ENCODE measurements at regions of chr6 and their contacts with region 1.

Region 1: DNA sequence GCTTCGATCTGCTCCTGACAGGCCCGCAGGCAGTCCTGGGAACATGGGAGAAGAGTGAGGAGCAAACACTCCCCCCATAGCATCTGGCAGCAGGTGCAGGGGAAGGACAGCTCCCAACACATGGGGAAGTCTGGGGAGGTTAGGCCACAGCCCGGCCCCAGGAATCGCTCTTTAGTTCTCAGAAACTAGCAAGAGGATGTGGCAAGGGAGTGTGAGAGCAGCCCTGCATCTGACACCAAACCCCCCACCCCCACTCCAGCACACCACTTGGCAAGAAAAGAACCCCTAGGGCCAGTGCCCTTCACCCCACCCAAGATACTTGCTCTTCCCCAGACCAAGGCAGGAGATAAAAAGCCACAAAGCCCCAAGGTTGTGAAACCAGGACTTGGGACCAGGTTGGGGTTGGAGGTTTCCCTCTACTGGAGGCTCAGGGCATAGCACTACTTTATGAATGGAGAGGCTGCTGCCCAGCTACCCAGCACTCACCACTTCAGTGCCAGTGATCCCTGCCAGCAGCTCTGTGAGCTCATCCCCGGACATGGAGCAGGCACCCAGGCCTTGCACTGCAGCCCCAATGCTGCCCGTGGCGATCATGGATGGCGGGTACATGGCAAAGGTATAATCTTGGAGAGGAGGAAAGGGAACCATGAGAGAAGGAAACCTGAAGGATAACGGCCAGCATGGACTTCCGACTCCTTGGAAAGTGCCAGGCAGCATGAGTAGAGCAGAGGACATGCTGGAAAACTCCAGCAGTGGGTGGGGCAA is 5.4 kb downstream of the CCND3 start:
- DNase-seq: peak; percentile 68 to 80
- H3K4me3 ChIP-seq: no peak overlapping the region
- H3K4me3 Mint-ChIP-seq: no peak overlapping the region
- H3K27ac Mint-ChIP-seq: peak overlapping the region; percentile 20
- H3K4me1 ChIP-seq: peaks cover 33% of the 10 kb centered on the region
- H3K4me1 Mint-ChIP-seq: peaks cover 17% of the 10 kb centered on the region
- H3K27me3 ChIP-seq: no peaks in the 10 kb centered on the region
- H3K27me3 Mint-ChIP-seq: no peaks in the 10 kb centered on the region
- CTCF ChIP-seq: peak; percentile 83 to 91

Region 2: DNA sequence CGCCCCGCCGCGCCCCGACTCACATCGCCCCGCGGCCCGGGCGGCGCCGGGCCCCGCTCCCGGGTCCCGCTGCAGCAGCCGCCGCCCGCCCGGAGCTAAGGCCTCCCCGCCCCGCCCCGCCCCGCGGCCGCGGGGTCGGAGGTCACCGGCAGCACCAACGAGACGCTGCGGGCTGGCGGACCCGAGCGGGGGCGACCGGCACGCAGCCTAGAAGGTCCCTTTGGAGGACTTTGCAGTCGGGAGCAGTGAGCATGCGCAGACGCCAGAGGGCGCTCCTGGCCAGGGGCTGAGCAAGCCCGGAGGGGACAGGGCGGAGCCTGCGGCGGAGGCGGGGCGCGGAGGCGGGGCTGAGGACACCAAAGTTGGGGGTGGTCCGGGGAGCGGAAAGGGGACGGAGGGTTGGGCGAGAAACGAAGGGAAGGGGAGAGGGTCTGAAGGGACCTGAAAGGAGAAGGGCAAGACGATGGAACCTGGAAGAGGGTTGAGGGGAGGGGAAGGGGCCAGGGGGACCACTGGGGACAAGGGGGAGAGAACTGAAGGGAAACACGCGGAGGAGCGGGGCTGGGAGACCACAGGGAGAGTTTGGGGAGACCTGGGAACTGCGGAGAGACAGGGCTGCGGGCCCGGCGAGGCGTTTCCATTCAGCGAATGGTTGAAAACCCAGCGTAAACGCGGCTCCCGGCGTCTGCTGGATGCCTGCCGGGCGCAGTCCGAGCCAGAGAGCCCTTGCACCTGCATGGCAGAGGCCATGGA is 156.3 kb before region 1 on chr6 and contains the start of gene FRS3:
- CTCF ChIA-PET with region 1: no interaction called
- POLR2A ChIA-PET with region 1: no interaction called
- intact Hi-C with region 1: loop called (anchors 1 kb)
- DNase-seq: peak; percentile 96 to 99
- H3K4me3 ChIP-seq: peak within 1 kb of the TSS; percentile 82
- H3K4me3 Mint-ChIP-seq: peak within 1 kb of the TSS; percentile 88
- H3K27ac Mint-ChIP-seq: peak within 1 kb of the TSS; percentile 74
- H3K4me1 ChIP-seq: 0 out of 2 replicates have a peak, but pooled peaks cover 3% of the 10 kb centered on the region
- H3K4me1 Mint-ChIP-seq: peaks cover 18% of the 10 kb centered on the region
- H3K27me3 ChIP-seq: no peaks in the 10 kb centered on the region
- H3K27me3 Mint-ChIP-seq: no peaks in the 10 kb centered on the region
- CTCF ChIP-seq: peak; percentile 85 to 96
- total RNA-seq, gene FRS3: 4.1 and 4.3 TPM in 2 replicates

Region 3: GRCh38 chr6:41801380-41801779 is 134.9 kb before region 1 on chr6:
- CTCF ChIA-PET with region 1: no interaction called
- POLR2A ChIA-PET with region 1: interaction called, 5 read pairs
- intact Hi-C with region 1: loop called (anchors 5 kb)
- DNase-seq: peak in 1 of 2 experiments; percentile 31
- H3K4me3 ChIP-seq: no peak overlapping the region
- H3K4me3 Mint-ChIP-seq: no peak overlapping the region
- H3K27ac Mint-ChIP-seq: no peak overlapping the region
- H3K4me1 ChIP-seq: no peaks in the 10 kb centered on the region
- H3K4me1 Mint-ChIP-seq: no peaks in the 10 kb centered on the region
- H3K27me3 ChIP-seq: no peaks in the 10 kb centered on the region
- H3K27me3 Mint-ChIP-seq: no peaks in the 10 kb centered on the region
- CTCF ChIP-seq: peak; percentile 37 to 52

Region 4: DNA sequence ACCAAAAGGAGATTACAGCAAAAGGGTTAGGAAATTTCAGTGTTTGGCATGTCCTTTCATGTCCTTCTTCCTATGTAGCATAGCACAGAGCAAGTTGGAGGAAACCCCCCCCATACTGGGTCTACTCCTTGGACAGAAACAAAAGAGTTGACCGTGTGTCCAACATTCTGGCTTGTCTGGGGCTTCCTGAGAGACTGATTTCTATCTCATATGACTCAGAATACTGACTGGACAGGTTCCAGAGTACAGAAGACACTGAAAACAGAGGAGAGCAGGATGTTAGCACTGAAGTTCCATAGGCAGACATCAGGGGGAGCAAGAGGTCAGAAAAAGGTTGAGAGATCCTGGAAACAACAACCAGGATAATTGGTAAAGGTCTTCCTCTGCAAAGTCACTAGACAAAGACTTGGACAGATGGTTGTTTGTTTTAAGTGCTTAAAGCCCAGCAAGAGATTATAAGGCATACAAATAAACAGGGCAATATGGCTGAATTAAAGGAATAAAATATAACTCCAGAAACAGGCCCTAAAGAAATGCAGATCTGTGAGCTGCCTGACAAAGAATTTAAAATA is 89.5 kb before region 1 on chr6:
- CTCF ChIA-PET with region 1: interaction called, 3 read pairs
- POLR2A ChIA-PET with region 1: interaction called, 3 read pairs
- intact Hi-C with region 1: loop called (anchors 1 kb)
- DNase-seq: peak; percentile 65 to 83
- H3K4me3 ChIP-seq: no peak overlapping the region
- H3K4me3 Mint-ChIP-seq: no peak overlapping the region
- H3K27ac Mint-ChIP-seq: no peak overlapping the region
- H3K4me1 ChIP-seq: peaks cover 5% of the 10 kb centered on the region; the same call in 1 of the 2 replicates
- H3K4me1 Mint-ChIP-seq: peaks cover 12% of the 10 kb centered on the region
- H3K27me3 ChIP-seq: no peaks in the 10 kb centered on the region
- H3K27me3 Mint-ChIP-seq: no peaks in the 10 kb centered on the region
- CTCF ChIP-seq: peak; percentile 81 to 86

Region 5: DNA sequence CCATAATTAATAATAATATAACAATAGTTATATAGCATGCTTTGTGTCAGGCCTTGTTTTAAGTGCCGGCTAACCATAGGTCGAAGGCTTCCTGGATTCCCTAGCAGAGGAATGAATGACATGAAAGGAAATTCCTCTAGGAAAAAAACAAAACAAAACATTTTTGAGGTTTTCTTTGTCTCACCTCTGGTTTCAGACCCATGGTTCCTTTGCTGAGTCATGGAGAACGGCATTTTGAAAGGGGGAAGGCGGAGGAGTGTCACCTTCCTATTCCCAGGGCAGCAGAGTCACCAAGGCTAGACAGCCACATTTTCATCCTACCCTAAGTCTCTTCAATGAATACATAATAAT is 30.7 kb after region 1 on chr6:
- CTCF ChIA-PET with region 1: no interaction called
- POLR2A ChIA-PET with region 1: no interaction called
- intact Hi-C with region 1: loop called (anchors 1 kb)
- DNase-seq: no peak
- H3K4me3 ChIP-seq: no peak overlapping the region
- H3K4me3 Mint-ChIP-seq: no peak overlapping the region
- H3K27ac Mint-ChIP-seq: no peak overlapping the region
- H3K4me1 ChIP-seq: peaks cover 16% of the 10 kb centered on the region
- H3K4me1 Mint-ChIP-seq: peaks cover under 1% of the 10 kb centered on the region
- H3K27me3 ChIP-seq: no peaks in the 10 kb centered on the region
- H3K27me3 Mint-ChIP-seq: no peaks in the 10 kb centered on the region
- CTCF ChIP-seq: no peak

Region 6: DNA sequence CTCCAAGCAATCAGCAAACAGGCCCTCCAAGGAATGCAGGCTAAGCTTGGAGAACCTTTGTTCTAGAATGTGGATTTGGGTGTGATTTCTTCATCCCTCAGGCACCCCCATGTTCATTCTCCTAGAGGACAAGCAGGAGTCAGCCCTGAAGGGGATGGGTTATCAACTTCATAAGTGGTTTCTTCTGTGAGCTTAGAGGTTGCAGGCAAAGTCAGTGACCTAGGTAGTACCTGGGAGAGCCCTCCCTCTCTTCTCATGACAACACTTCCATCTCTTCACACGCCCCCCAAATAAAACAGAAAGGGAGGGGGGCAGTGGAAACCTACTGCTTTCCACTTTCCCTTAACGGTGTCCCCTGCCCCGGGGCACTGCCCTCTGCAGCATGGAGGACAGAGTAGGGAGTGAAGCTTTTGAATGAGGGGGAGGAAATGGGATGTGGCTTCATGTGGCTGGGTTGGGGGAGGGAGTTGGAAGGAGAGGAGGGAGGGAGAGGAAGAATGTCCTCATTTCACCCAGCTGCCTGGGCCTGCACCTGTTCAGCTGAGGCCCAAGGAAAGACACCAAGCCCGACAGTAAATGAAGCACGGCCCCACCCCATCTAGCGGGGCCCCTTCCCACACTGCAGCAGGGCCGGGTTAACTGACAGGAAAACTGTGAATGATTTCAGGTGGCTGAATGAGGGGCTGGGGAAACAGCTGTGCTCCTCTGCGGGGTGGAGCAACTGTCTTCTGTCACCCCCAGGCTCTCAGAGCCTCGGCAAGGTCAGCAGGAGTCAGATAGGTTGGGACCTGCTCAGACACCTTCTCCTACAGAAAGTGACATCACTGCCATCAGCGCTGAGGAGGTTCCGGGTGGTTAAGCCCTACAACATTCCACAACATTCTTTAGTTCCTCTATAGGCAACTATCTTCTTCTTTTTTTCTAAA is 74.0 kb after region 1 on chr6:
- CTCF ChIA-PET with region 1: no interaction called
- POLR2A ChIA-PET with region 1: no interaction called
- intact Hi-C with region 1: loop called (anchors 1 kb)
- DNase-seq: peak; percentile 49 to 62
- H3K4me3 ChIP-seq: no peak overlapping the region
- H3K4me3 Mint-ChIP-seq: no peak overlapping the region
- H3K27ac Mint-ChIP-seq: peak overlapping the region; percentile 64
- H3K4me1 ChIP-seq: peaks cover 10% of the 10 kb centered on the region
- H3K4me1 Mint-ChIP-seq: peaks cover 13% of the 10 kb centered on the region
- H3K27me3 ChIP-seq: no peaks in the 10 kb centered on the region
- H3K27me3 Mint-ChIP-seq: no peaks in the 10 kb centered on the region
- CTCF ChIP-seq: no peak

Region 7: DNA sequence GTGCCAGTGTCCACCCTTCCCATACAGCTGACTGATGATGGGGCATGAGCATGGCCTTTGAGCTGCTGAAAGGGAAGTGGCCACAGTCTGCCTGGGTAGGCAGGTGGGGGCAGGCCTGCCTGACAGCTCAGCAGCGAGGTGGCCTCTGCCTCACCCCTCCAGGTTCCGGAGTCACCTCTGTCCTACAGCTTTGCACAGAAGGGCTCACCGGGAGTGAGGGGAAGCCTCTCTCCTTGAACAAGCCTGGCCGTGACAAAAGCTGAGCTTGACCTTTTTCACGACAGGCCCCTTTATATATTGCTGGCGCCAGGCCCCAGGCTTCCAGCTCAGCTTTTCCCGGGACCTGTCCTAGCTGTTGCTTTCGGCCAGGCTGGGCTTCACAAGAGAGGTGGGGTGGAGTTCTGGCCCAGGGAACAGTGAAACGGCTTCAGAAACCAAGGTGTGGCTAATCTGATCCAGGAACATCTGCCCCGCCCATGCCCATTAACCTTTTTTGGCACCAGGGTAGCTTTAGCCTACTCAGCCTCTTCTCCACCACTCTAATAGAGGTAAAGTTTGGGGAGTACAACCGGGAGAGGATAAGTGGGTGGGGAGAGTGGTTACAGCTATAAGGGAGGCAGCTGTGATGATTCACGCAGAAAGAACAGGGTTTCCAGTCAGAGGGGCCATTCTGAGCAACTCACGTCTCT is 163.2 kb after region 1 on chr6:
- CTCF ChIA-PET with region 1: no interaction called
- POLR2A ChIA-PET with region 1: no interaction called
- intact Hi-C with region 1: no loop called
- DNase-seq: no peak
- H3K4me3 ChIP-seq: no peak overlapping the region
- H3K4me3 Mint-ChIP-seq: no peak overlapping the region
- H3K27ac Mint-ChIP-seq: no peak overlapping the region
- H3K4me1 ChIP-seq: 0 out of 2 replicates have a peak, but pooled peaks cover 8% of the 10 kb centered on the region
- H3K4me1 Mint-ChIP-seq: peaks cover 16% of the 10 kb centered on the region
- H3K27me3 ChIP-seq: no peaks in the 10 kb centered on the region
- H3K27me3 Mint-ChIP-seq: no peaks in the 10 kb centered on the region
- CTCF ChIP-seq: no peak